GM10248 (cell line): ENCODE measurements at regions of chr17 and their contacts with region 1.

Region 1: DNA sequence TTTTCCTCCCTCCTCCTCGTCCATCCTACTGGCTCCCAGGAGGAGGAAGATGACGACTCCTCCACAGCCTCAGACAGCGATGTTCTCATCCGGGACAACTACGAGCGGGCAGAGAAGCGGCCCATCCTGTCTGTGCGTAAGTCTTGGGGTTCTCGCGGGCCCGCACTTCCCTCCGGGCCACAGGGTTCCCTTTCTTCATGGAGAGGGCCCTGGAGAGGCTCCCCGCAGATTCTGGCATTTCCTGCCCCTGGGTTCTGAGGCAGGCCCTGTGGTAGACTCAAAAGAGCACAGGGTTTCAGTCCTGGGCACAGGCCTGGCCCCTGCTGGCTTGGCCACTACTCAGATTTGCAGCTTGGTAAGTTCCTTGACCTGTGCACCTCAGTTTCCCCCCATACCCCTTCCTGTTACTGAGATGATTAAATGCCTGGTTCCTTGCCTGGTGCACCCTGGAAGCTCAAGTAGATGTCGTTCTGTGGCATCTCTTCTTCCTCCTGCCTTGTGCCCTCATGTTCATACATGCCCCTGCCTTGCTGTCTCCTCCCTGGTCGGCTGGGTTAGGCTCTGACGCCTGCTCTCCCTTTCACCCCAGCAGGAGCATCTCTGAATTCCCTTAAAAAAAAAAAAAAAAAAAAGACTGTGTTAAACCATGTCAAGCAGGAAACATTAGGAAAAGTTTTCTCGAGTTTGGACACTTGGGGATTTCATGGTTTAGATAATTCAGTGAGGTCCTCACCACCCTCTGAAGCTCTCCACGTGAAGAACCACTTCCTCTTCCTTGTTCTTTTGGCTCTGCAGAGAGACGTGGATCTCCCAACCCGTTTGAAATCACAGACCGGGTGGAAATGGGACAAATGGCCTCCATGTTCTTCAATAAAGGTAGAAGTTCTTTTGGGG is 14.3 kb upstream of the NAT9 start:
- DNase-seq: no peak
- CTCF ChIP-seq: no peak

Region 2: DNA sequence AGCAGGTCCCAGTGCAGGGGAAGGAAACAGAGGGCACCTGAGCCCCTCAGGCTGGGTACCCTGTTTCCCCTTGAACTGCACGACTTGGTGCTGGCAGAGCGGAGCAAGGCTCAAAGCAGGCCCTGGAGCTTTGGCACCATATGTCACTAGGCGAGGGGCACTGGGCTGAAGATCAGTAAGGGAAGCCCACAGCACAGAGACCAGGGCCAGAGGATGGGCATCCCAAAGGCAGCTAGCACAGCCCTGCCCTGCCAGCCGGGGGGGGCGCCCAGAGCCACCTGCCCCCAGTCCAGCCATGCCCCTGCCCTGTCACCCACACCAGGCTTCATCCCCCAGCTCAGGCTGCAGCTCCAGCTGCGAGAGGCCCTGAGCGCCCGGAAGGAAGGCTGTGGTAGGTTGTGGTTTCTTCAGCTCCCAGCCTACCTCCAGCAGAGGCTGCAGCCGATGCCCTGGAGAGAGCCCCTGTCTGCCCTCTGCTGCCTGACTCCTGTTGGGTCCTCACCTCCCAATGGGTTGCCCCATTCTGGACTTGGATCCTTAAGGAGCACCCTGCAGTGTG is 31.1 kb before region 1 on chr17:
- CTCF ChIA-PET with region 1: interaction called, 11 read pairs
- POLR2A ChIA-PET with region 1: no interaction called
- DNase-seq: peak; percentile 69
- CTCF ChIP-seq: peak; percentile 16

Region 3: GRCh38 chr17:74801896-74802295 is 11.5 kb after region 1 on chr17:
- CTCF ChIA-PET with region 1: interaction called, 15 read pairs
- POLR2A ChIA-PET with region 1: no interaction called
- DNase-seq: no peak
- CTCF ChIP-seq: no peak

Region 4: GRCh38 chr17:74842599-74843351 is 52.4 kb after region 1 on chr17:
- CTCF ChIA-PET with region 1: interaction called, 18 read pairs
- POLR2A ChIA-PET with region 1: no interaction called
- DNase-seq: peak; percentile 74
- CTCF ChIP-seq: peak; percentile 41

Region 5: GRCh38 chr17:74873038-74873873 is 82.8 kb after region 1 on chr17:
- CTCF ChIA-PET with region 1: interaction called, 248 read pairs
- POLR2A ChIA-PET with region 1: no interaction called
- DNase-seq: peak; percentile 100
- CTCF ChIP-seq: no peak